ENCODE measurements at regions of chr10 and their contacts with region 1.

Region 1: DNA sequence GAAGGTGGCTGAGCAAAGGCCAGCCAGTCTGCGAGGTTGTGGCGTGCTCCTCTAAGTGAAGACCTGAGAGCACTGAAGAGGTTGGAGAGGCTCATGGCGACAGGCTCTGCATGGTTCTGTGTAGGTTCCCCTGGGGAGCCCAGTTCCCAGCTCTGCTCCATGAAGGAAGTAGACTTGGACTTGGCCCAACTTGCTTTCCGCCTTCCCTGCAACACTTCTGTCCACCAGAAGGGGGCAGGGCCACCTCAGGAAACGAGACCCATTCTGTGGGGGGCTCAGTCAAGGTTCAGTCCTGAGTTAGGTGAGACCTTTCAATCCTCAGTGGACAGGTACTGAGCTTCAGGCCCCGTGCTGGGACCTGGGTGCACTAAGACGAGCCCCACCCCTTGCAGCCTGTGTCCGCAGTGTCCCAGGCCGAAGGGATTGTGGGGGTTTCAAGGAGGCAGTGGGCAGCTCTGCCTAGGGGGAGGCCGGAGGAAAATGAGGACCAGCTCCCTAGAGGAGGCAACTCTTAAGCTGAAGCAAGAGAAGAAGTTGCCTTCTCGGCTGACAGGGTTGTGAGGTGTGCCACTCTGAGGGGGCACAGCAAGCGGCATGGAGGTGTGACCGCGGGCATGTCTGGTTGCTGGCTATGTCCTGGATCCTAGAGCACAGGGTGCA is 15.0 kb upstream of the PCBD1 start:
- DNase-seq: no peak

Region 2: GRCh38 chr10:70715853-70716795 is 187.3 kb before region 1 on chr10:
- intact Hi-C with region 1: no loop called
- DNase-seq: no peak

Region 3: GRCh38 chr10:71285180-71285545 is 381.8 kb after region 1 on chr10:
- intact Hi-C with region 1: loop called (anchors 2 kb)
- DNase-seq: no peak